ENCODE measurements at regions of chr16 and their contacts with region 1.

Region 1: GRCh38 chr16:69286941-69287713 is 24.0 kb upstream of the VPS4A start:
- DNase-seq: peak; percentile 30 to 49 (median 44)
- H3K4me3 ChIP-seq: no peak overlapping the region
- H3K4me3 Mint-ChIP-seq: no peak overlapping the region
- H3K27ac ChIP-seq: no peak overlapping the region
- H3K27ac Mint-ChIP-seq: no peak overlapping the region
- H3K4me1 ChIP-seq: peaks cover 5 to 6% of the 10 kb centered on the region in 2 donors
- H3K4me1 Mint-ChIP-seq: peaks cover 5% of the 10 kb centered on the region
- H3K27me3 ChIP-seq: no peaks in the 10 kb centered on the region
- H3K27me3 Mint-ChIP-seq: peaks cover 0 to 11% (median 5%) of the 10 kb centered on the region in 3 donors
- CTCF ChIP-seq: peak; percentile 80

Region 2: DNA sequence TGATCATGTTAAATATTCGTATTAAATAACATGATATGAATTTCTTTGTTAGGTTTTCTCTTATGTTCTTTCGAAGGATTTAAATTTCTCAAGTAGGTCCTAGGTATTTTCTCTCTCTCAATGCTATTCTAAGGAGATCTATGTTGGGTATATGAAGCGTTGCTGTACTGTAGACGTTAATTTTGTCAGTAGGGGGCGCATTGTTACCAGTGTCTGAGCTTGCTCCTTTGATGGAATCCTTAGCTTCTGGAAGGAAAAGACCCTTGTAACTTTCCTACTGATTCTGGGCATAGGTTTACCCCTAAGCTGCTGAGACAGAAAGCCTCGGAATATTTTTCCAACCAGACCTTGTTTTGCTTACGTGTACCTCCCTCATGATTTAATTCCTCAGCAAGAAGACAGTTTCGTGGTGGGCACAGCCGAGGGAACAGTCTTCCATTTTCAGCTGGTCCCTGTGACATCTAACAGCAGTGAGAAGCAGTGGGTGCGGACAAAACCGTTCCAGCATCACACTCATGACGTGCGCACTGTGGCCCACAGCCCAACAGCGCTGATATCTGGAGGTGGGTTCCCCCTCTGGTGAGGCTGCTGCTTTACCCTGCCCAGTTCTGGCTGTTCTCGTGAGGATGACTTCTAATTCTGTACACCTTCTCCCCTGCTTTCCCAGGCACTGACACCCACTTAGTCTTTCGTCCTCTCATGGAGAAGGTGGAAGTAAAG is 136.8 kb before region 1 on chr16:
- intact Hi-C with region 1: loop called (anchors 1 to 5 kb)
- DNase-seq: peak; percentile 44 to 71 (median 55)
- H3K4me3 ChIP-seq: no peak overlapping the region
- H3K4me3 Mint-ChIP-seq: no peak overlapping the region
- H3K27ac ChIP-seq: no peak overlapping the region
- H3K27ac Mint-ChIP-seq: no peak overlapping the region
- H3K4me1 ChIP-seq: no peaks in the 10 kb centered on the region
- H3K4me1 Mint-ChIP-seq: no peaks in the 10 kb centered on the region
- H3K27me3 ChIP-seq: no peaks in the 10 kb centered on the region
- H3K27me3 Mint-ChIP-seq: peaks cover 0 to 2% (median 0%) of the 10 kb centered on the region in 3 donors
- CTCF ChIP-seq: peak; percentile 86

Region 3: GRCh38 chr16:69345923-69346322 is 58.8 kb after region 1 on chr16:
- intact Hi-C with region 1: no loop called
- DNase-seq: peak; percentile 37 to 61 (median 48)
- H3K4me3 ChIP-seq: no peak overlapping the region
- H3K4me3 Mint-ChIP-seq: no peak overlapping the region
- H3K27ac ChIP-seq: peak overlapping the region; percentile 26 to 67
- H3K27ac Mint-ChIP-seq: peak overlapping the region; percentile 36 to 89 (median 80)
- H3K4me1 ChIP-seq: peaks cover 18 to 22% of the 10 kb centered on the region in 2 donors
- H3K4me1 Mint-ChIP-seq: peaks cover 20% of the 10 kb centered on the region
- H3K27me3 ChIP-seq: no peaks in the 10 kb centered on the region
- H3K27me3 Mint-ChIP-seq: no peaks in the 10 kb centered on the region
- CTCF ChIP-seq: no peak